Heart right ventricle (tissue), 16 donors: ENCODE measurements at regions of chr18 and their contacts with region 1.

Region 1: GRCh38 chr18:52657043-52657805 is 317.2 kb downstream of the DCC start:
- DNase-seq: no peak
- ATAC-seq: no peak
- H3K4me3 ChIP-seq: no peak overlapping the region
- H3K27ac ChIP-seq: no peak overlapping the region
- H3K4me1 ChIP-seq: no peaks in the 10 kb centered on the region
- H3K27me3 ChIP-seq: no peaks in the 10 kb centered on the region
- CTCF ChIP-seq: no peak

Region 2: GRCh38 chr18:52510139-52510538 is 147.1 kb before region 1 on chr18:
- intact Hi-C with region 1: loop called in 1 of 10 experiments (anchors 5 kb)
- DNase-seq: no peak
- ATAC-seq: no peak
- H3K4me3 ChIP-seq: no peak overlapping the region
- H3K27ac ChIP-seq: no peak overlapping the region
- H3K4me1 ChIP-seq: no peaks in the 10 kb centered on the region
- H3K27me3 ChIP-seq: no peaks in the 10 kb centered on the region
- CTCF ChIP-seq: no peak